Breast epithelium (tissue), 4 donors: ENCODE measurements at regions of chr5 and their contacts with region 1.

Region 1: DNA sequence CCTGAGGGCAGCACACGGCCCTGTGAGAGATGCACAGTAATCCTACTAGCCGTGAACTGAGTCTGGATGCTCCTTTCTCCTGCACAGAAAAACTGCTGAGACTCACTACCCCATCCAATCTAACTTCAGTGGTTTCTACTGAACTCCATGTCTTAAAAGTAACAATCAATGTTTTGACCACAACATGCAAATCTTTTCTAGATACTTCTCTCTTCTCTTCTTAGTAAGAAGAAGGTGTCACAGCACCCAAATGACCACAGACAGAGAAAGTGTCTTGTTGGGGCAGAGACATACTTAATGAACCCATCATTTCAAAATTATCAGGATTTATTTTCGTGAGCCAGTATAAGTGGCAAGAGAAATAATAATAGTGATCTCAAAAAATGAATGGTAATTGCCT is 285.8 kb upstream of the MEF2C start:
- DNase-seq: no peak
- H3K4me3 ChIP-seq: no peak overlapping the region
- H3K27ac ChIP-seq: no peak overlapping the region
- H3K4me1 ChIP-seq: no peaks in the 10 kb centered on the region
- H3K27me3 ChIP-seq: no peaks in the 10 kb centered on the region
- CTCF ChIP-seq: no peak
- POLR2A ChIP-seq: no peak

Region 2: DNA sequence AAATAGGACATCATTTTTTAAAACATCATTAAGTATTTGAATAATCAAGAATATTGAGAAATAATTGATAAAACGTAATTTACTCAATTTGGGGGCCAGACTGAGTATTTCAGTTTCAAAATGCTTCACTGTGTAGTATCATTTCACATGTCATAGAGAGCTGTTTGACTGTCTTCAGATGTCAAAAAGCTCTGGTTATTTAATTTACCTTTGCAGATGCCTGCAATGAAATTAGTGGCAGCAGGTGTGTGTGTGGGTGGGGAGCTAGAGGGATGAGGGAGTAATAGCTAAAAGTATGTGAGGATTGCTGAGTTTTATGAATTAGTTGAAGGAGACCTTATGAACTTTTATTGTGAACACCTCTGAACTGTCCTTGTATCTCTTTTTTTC is 281.4 kb after region 1 on chr5:
- intact Hi-C with region 1: loop called (anchors 5 kb)
- DNase-seq: no peak
- H3K4me3 ChIP-seq: no peak overlapping the region
- H3K27ac ChIP-seq: no peak overlapping the region
- H3K4me1 ChIP-seq: no peaks in the 10 kb centered on the region
- H3K27me3 ChIP-seq: no peaks in the 10 kb centered on the region
- CTCF ChIP-seq: no peak
- POLR2A ChIP-seq: no peak

Region 3: DNA sequence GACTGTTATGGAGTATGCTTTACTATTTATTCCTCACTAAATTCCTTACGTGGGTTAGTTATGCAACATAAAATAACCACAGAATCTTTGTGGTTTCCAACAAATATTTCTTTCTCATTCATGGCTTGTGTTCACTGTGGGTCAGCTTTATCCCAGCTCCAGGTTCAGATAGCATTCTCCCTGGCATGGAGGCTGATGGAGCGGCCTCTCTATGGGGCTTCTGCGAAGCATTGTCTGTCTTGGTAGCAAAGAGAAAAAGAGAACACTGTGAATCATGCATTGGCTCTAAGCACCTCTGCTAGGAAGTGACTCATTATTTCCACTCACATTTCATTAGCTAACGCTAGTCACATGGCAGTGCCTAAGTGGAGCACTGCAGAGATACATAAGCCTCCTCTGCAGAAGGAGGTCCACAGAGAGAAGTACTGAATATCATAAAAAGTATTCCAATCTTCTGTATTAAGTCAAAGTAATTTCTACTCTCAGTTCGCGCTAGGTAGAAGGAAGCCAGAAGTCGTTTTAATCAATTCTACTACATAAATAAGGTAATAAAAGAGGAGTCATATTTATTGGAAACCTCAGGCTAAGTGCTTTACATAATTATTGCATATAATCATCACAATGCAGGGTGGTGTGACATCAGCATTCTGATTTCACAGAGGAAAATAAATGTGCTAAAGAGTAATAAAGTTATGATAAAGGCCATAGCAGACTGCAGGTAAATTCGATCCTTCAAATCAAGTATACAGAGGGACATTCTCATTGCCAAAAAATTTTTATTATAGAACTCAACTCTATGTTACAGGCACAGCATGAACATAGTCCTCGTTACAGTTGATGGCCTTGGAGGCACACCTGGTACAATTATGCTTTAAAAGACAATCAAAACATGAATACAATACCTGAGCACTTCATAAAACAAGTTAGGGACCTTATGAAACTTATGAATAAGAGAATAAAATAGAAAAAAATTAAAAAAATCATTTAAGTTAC is 709.7 kb after region 1 on chr5:
- intact Hi-C with region 1: no loop called
- DNase-seq: peak in 1 of 2 donors; percentile 30
- H3K4me3 ChIP-seq: no peak overlapping the region
- H3K27ac ChIP-seq: peak overlapping the region; percentile 18 to 36
- H3K4me1 ChIP-seq: no peaks in the 10 kb centered on the region
- H3K27me3 ChIP-seq: no peaks in the 10 kb centered on the region
- CTCF ChIP-seq: no peak
- POLR2A ChIP-seq: no peak